ENCODE measurements at regions of chr12 and their contacts with region 1.

Region 1: DNA sequence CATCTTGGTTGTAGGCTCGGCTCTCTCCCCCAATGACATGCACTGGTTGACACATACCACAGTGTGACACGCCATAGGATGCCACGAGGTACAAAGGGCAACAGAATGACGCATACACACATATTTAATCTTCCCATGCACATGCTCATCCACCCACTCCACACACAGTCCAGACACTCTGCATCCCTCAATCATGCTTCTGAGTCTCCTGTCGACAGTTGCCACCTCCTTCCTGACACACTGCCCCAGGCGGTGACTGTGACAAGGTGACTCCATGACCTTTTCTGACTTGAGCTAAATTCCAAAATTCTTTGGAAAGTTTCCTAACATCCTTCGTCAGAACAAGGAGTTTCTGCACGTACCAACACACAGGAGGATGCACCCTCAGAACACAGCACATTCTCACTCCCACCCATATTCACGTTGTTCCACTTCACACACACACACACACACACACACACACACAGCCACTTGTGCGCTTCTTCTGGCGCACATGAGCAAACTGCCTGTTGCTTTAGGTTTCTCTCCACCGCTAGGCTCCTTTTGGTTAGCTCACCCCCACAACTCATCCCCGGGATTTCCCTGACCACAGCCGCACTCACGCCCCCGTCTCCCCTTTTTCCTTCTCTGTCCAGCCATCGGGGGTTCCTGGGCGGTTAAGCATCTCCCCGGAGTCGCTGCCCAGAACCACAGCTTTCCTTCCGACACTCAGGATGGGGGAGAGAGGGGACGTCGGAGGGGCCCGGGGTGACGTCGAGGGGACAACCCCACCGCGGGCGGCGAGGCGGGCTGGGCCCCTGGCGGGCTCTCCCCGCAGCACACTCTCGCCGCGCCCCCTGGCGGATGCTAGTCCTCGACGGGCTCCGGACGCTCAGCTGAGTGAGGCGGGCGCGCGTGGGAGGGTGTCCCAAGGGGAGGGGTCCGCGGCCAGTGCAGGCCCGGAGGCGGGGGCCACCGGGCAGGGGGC is 524 bp upstream of the WNT1 start:
- DNase-seq: peak; percentile 92
- ATAC-seq: peak; percentile 69
- H3K4me3 Mint-ChIP-seq: peak overlapping the region; percentile 42
- H3K27ac Mint-ChIP-seq: peak overlapping the region; percentile 10
- H3K4me1 Mint-ChIP-seq: peaks cover 54% of the 10 kb centered on the region
- H3K27me3 Mint-ChIP-seq: peaks cover 73% of the 10 kb centered on the region

Region 2: DNA sequence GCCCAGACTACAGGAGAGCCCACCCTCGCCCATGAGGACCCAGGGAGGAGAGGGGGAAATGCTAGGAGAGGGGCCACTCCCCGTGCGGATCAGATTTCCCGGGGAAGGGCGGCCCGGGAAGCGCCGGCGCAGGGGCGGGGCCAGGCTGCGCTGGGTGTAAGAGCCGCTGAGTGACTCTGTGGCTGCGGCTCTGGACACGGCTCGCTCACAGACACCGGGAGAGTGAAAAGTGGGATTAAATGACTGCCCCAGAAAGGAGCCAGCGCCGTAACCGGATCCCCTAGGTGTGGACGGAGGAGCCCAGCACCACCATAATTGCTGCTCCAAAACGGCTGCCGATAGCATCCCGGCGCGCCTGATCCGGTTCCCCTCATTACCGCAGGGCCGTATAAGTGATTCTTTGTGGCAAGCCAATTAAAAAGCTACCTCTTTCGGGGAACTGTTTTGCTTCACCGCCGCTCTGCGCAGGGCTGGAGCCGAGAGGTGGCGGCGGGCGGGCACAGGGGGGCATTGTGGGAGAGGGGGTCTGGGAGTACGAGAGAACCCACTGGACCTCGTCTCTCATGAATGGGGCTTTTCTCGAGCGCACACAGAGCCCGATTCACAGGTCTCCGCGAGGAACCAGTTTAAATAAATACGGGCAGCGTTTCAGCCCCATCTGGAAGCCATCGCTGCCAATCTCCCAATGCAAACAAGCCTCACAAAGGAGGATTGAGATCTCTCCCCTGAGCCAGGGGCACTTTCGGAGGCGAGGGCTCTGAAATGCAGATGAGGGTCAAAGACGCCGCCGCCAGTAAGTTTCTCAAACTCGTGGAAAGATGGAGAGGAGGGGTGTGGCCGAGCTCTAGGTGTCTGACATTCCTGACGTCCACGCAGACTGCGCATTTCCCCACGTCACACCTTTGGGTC is 975.8 kb before region 1 on chr12:
- CTCF ChIA-PET with region 1: no interaction called
- POLR2A ChIA-PET with region 1: no interaction called
- intact Hi-C with region 1: loop called in 1 of 2 experiments (anchors 10 kb)
- DNase-seq: peak; percentile 24
- ATAC-seq: peak; percentile 27
- H3K4me3 Mint-ChIP-seq: peak overlapping the region; percentile 65
- H3K27ac Mint-ChIP-seq: no peak overlapping the region
- H3K4me1 Mint-ChIP-seq: peaks cover 32% of the 10 kb centered on the region
- H3K27me3 Mint-ChIP-seq: peaks cover 76% of the 10 kb centered on the region

Region 3: GRCh38 chr12:48336562-48336961 is 641.0 kb before region 1 on chr12:
- CTCF ChIA-PET with region 1: no interaction called
- POLR2A ChIA-PET with region 1: no interaction called
- intact Hi-C with region 1: no loop called
- DNase-seq: no peak
- ATAC-seq: no peak
- H3K4me3 Mint-ChIP-seq: no peak overlapping the region
- H3K27ac Mint-ChIP-seq: no peak overlapping the region
- H3K4me1 Mint-ChIP-seq: peaks cover 12% of the 10 kb centered on the region
- H3K27me3 Mint-ChIP-seq: no peaks in the 10 kb centered on the region

Region 4: GRCh38 chr12:48838048-48838447 is 139.6 kb before region 1 on chr12:
- CTCF ChIA-PET with region 1: no interaction called
- POLR2A ChIA-PET with region 1: no interaction called
- intact Hi-C with region 1: no loop called
- DNase-seq: no peak
- ATAC-seq: no peak
- H3K4me3 Mint-ChIP-seq: no peak overlapping the region
- H3K27ac Mint-ChIP-seq: no peak overlapping the region
- H3K4me1 Mint-ChIP-seq: no peaks in the 10 kb centered on the region
- H3K27me3 Mint-ChIP-seq: no peaks in the 10 kb centered on the region

Region 5: GRCh38 chr12:48903982-48904411 is 73.6 kb before region 1 on chr12:
- CTCF ChIA-PET with region 1: interaction called, 4 read pairs
- POLR2A ChIA-PET with region 1: no interaction called
- intact Hi-C with region 1: loop called (anchors 5 kb)
- DNase-seq: peak; percentile 92
- ATAC-seq: peak; percentile 94
- H3K4me3 Mint-ChIP-seq: peak overlapping the region; percentile 63
- H3K27ac Mint-ChIP-seq: no peak overlapping the region
- H3K4me1 Mint-ChIP-seq: peaks cover 5% of the 10 kb centered on the region
- H3K27me3 Mint-ChIP-seq: peaks cover 3% of the 10 kb centered on the region

Region 6: DNA sequence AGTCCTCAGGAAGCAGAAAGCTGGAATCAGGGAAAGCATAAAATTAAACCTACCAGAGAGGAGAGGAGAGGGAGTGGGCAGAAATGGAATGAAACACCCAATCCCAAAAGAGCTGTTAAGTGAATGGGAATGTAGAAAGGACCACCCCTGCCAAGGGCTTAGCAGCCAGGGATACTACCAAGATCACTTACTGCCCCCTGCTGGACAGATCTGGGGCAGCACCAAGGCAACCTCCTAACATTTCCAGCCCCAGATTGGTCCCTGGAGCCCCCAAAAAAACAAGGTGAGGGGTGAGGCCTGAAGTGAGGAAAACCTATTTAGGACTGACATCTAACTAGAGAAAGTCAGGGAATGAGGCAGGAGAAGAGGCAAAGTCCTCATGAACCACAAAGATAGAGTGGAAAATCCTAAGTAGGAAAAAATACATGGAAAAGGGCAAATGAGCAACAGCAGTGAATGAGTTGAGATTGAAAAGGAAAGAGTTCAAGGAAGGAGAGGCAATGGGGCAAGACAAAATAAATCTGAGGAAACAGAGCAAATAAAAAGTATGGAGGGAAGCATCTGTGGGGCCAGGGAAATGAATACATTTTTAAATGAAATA is 41.1 kb before region 1 on chr12:
- CTCF ChIA-PET with region 1: interaction called, 10 read pairs
- POLR2A ChIA-PET with region 1: no interaction called
- intact Hi-C with region 1: loop called in 1 of 2 experiments (anchors 5 kb)
- DNase-seq: peak; percentile 89
- ATAC-seq: peak; percentile 82
- H3K4me3 Mint-ChIP-seq: no peak overlapping the region
- H3K27ac Mint-ChIP-seq: no peak overlapping the region
- H3K4me1 Mint-ChIP-seq: peaks cover 23% of the 10 kb centered on the region
- H3K27me3 Mint-ChIP-seq: no peaks in the 10 kb centered on the region

Region 7: DNA sequence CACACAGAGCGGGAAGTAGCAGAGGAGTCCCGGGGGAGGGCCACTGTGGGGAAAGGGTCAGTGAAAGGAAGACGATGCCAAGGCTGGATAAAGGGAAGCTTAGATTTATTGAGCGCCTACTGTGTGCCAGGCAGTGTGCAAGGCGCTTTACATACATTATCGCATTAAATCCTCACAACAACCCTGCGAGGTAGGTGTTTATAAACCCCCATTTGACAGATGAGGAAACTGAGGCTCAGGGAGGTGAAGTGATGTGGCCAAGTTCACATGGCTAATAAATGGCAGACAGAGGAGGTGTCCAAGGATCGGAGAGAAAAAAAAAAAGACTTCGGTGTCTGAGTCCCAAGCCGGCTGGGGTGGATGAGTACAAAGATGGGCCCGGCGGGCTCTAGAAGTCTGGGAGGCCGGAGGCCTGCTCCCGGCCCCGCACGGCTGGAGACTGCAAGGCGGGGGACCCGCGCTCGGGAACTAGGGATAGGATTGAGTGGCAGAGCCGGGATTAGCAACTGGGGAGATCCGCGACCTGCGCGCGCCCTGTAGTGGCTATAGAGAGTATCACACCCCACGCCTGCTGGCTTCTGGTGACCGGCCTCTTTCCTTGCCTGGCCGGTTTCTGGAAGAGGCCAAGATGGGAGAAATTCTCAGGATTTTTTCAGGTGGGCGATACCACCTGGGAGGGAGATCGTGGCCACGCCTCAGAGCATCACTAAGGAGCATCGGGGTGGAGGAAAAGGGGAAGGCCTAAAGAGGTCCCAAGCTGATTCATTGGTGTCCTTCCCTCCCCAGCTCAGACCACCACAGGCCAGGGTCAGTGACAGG is 17.7 kb after region 1 on chr12:
- CTCF ChIA-PET with region 1: interaction called, 246 read pairs
- POLR2A ChIA-PET with region 1: interaction called, 5 read pairs
- intact Hi-C with region 1: loop called (anchors 1 kb)
- DNase-seq: peak; percentile 77
- ATAC-seq: peak; percentile 13
- H3K4me3 Mint-ChIP-seq: no peak overlapping the region
- H3K27ac Mint-ChIP-seq: no peak overlapping the region
- H3K4me1 Mint-ChIP-seq: peaks cover 26% of the 10 kb centered on the region
- H3K27me3 Mint-ChIP-seq: peaks cover 52% of the 10 kb centered on the region

Region 8: DNA sequence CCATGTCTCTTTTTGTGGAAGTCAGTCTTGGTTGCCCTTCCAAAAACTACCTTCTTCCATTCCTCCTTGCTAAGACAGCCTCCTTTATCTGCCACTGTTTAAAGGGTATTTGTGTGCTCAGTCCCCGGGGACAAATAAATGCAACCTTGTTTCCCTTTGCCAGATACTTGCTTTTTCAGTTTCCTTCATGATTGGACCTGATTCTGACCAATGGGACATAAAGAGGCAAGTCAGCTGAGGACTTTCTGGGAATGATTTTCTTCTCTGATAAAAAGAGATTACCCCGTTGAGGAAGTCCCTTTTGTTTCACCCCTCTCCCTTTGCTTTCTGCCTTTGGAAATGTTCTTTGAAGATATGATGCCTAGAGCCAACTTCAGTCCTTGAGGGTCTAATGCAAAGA is 161.0 kb after region 1 on chr12:
- CTCF ChIA-PET with region 1: no interaction called
- POLR2A ChIA-PET with region 1: no interaction called
- intact Hi-C with region 1: no loop called
- DNase-seq: no peak
- ATAC-seq: no peak
- H3K4me3 Mint-ChIP-seq: no peak overlapping the region
- H3K27ac Mint-ChIP-seq: no peak overlapping the region
- H3K4me1 Mint-ChIP-seq: peaks cover 9% of the 10 kb centered on the region
- H3K27me3 Mint-ChIP-seq: no peaks in the 10 kb centered on the region